ENCODE measurements at regions of chr3 and their contacts with region 1.

Region 1: GRCh38 chr3:137110484-137110883 is 152.7 kb downstream of the IL20RB start:
- DNase-seq: no peak
- ATAC-seq: peak; percentile 85
- H3K4me3 ChIP-seq: no peak overlapping the region
- H3K27ac ChIP-seq: no peak overlapping the region
- H3K4me1 ChIP-seq: no peaks in the 10 kb centered on the region
- H3K27me3 ChIP-seq: no peaks in the 10 kb centered on the region; a peak in 1 of 4 replicates
- CTCF ChIP-seq: peak; percentile 68 to 89 (median 88)
- EP300 ChIP-seq: no peak
- POLR2A ChIP-seq: no peak
- RAD21 ChIP-seq: peak; percentile 95

Region 2: DNA sequence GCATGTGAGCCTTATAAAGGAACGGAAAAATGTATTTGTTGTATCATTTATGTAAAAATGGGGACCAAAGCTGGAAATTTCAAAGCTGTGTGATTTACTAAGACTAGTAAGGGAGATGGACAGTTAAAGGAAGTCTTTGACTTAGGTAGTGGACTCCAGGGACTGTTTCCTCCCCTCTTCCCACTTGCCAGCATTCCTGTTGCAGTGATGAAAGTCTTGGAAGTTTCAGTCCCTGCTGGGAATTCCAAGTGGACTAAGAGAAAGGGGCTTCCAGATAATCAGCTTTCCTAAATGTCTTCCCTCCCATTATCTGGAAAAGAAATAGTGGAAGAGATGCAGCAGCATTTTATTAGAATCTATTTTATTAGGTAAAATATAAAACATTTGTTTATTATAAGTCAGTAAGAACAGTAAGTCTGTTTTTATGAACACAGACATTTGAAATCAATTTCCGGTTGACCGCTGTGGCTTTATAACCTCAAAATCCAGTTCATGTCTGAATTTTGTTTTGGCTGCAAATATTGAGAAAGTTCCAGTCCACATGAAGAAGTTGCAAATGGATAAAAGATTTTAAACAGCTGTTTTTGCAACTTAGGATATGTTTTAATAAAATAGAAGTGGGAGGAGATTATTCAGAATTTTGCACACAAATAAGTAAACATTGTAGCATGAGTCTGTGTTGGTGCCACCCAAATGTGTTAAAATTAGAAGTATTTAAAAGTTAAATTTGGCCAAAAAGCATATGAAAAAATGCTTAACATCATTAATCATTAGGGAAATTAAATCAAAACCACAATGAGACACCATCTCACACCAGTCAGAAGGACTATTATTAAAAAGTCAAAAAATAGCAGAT is 10.9 kb before region 1 on chr3:
- CTCF ChIA-PET with region 1: interaction called, 21 read pairs
- POLR2A ChIA-PET with region 1: no interaction called
- RAD21 ChIA-PET with region 1: interaction called, 9 read pairs
- SMC1A ChIA-PET with region 1: interaction called, 5 read pairs
- in situ Hi-C with region 1: no loop called
- intact Hi-C with region 1: no loop called
- DNase-seq: no peak
- ATAC-seq: no peak
- H3K4me3 ChIP-seq: no peak overlapping the region
- H3K27ac ChIP-seq: no peak overlapping the region
- H3K4me1 ChIP-seq: no peaks in the 10 kb centered on the region
- H3K27me3 ChIP-seq: no peaks in the 10 kb centered on the region
- CTCF ChIP-seq: no peak
- EP300 ChIP-seq: no peak
- POLR2A ChIP-seq: no peak
- RAD21 ChIP-seq: no peak